Head of caudate nucleus (tissue), 42 donors: ENCODE measurements at regions of chr15 and their contacts with region 1.

Region 1: GRCh38 chr15:78709263-78709882 is 68.4 kb upstream of the CHRNB4 start:
- DNase-seq: peak; percentile 30 to 89 (median 72)

Region 2: GRCh38 chr15:78315686-78316282 is 393.6 kb before region 1 on chr15:
- intact Hi-C with region 1: no loop called
- DNase-seq: peak in 6 of 42 donors; percentile 9 to 30 (median 22)

Region 3: DNA sequence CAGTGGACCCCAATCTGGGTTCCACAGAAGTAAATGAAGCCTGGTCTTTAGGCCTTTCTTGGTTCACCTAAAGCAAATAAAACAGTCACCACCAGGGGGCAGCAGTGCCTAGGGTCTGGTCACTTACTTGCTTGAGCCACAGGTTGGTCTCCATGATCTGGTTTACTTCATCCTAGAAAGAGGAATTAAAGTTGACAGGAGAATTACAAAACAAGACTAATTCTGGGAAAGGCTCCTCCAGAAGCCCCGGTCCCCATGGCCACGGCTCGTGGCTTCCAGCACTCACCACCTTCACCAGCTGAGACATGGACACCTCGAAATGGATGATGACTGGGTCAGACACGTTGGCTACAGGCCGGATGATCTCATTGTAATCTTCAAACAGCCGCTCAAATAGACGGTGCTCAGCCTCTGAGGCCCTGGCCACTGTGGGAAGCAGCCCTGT is 90.9 kb before region 1 on chr15:
- intact Hi-C with region 1: loop called (anchors 5 kb)
- DNase-seq: peak; percentile 69 to 98 (median 90)

Region 4: GRCh38 chr15:78640840-78641719 is 68.3 kb before region 1 on chr15 and contains the start of gene CHRNB4:
- intact Hi-C with region 1: loop called (anchors 10 kb)
- DNase-seq: no peak